Mammary epithelial cell (primary cell): ENCODE measurements at regions of chr16 and their contacts with region 1.

Region 1: GRCh38 chr16:8655184-8655717 is 19.2 kb upstream of the ABAT start:
- DNase-seq: peak; percentile 42
- H3K4me3 ChIP-seq: no peak overlapping the region
- H3K27ac ChIP-seq: no peak overlapping the region
- H3K4me1 ChIP-seq: no peaks in the 10 kb centered on the region
- H3K27me3 ChIP-seq: no peaks in the 10 kb centered on the region
- CTCF ChIP-seq: peak; percentile 36 to 49

Region 2: DNA sequence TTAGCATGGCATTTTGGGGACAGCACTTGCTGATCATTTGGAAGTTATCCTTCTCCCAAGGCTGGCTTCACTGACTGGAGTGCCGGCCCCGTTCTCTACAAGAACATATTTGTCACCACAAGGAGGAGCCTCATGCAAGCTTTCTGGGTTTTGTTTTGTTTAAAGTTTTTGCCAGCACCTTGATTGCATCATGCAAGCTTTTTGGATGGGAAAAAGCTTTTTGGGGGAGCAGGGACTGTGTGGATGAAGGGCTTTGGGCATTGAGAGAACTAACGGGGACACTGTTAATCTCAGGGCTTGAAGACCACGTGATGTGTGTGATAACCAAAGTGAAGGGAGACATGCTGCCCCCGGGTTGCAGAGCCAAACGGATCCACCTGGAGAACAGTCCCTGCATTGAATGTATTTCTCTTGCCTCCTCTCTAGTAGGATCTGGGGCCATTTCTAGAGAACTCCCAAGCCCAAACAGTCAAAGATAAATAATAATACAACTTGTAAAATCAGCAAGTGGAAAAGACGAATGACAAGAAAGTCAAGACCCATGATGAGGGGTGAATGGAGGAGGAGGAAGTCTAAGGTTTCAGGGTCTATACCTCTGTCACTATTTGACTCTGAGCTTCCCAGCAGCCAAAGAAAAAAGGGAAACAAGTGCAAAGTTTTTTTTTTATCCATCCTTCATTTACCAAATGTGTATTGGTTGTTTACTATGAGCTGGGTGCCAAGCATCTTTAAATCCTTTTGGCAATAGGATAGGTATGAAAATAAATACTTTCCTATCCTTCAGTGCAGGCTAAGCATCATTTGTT is 82.1 kb before region 1 on chr16:
- CTCF ChIA-PET with region 1: no interaction called
- dilution Hi-C with region 1: no loop called
- in situ Hi-C with region 1: loop called (anchors 5 to 10 kb)
- intact Hi-C with region 1: loop called (anchors 1 kb)
- DNase-seq: peak; percentile 24
- H3K4me3 ChIP-seq: no peak overlapping the region
- H3K27ac ChIP-seq: no peak overlapping the region
- H3K4me1 ChIP-seq: no peaks in the 10 kb centered on the region
- H3K27me3 ChIP-seq: no peaks in the 10 kb centered on the region
- CTCF ChIP-seq: peak; percentile 33 to 67

Region 3: GRCh38 chr16:8621572-8622314 is 33.5 kb before region 1 on chr16 and contains the start of gene METTL22:
- CTCF ChIA-PET with region 1: no interaction called
- dilution Hi-C with region 1: no loop called
- in situ Hi-C with region 1: no loop called
- intact Hi-C with region 1: loop called (anchors 2 kb)
- DNase-seq: peak; percentile 74
- H3K4me3 ChIP-seq: peak within 1 kb of the TSS; percentile 63 to 85 (median 79)
- H3K27ac ChIP-seq: peak within 1 kb of the TSS; percentile 83
- H3K4me1 ChIP-seq: peaks cover 10% of the 10 kb centered on the region
- H3K27me3 ChIP-seq: no peaks in the 10 kb centered on the region
- CTCF ChIP-seq: no peak
- total RNA-seq, gene METTL22: 35.2 to 40.9 TPM

Region 4: GRCh38 chr16:8694795-8695728 is 39.8 kb after region 1 on chr16:
- CTCF ChIA-PET with region 1: no interaction called
- dilution Hi-C with region 1: no loop called
- in situ Hi-C with region 1: no loop called
- intact Hi-C with region 1: no loop called
- DNase-seq: no peak
- H3K4me3 ChIP-seq: no peak overlapping the region
- H3K27ac ChIP-seq: no peak overlapping the region
- H3K4me1 ChIP-seq: no peaks in the 10 kb centered on the region
- H3K27me3 ChIP-seq: no peaks in the 10 kb centered on the region
- CTCF ChIP-seq: no peak

Region 5: GRCh38 chr16:8708536-8708935 is 53.3 kb after region 1 on chr16:
- CTCF ChIA-PET with region 1: no interaction called
- dilution Hi-C with region 1: no loop called
- in situ Hi-C with region 1: no loop called
- intact Hi-C with region 1: no loop called
- DNase-seq: no peak
- H3K4me3 ChIP-seq: no peak overlapping the region
- H3K27ac ChIP-seq: no peak overlapping the region
- H3K4me1 ChIP-seq: no peaks in the 10 kb centered on the region
- H3K27me3 ChIP-seq: no peaks in the 10 kb centered on the region
- CTCF ChIP-seq: no peak

Region 6: GRCh38 chr16:8878521-8878911 is 223.3 kb after region 1 on chr16:
- CTCF ChIA-PET with region 1: no interaction called
- dilution Hi-C with region 1: no loop called
- in situ Hi-C with region 1: loop called (anchors 10 kb)
- intact Hi-C with region 1: no loop called
- DNase-seq: peak; percentile 72
- H3K4me3 ChIP-seq: no peak overlapping the region
- H3K27ac ChIP-seq: peak overlapping the region; percentile 34
- H3K4me1 ChIP-seq: peaks cover 15% of the 10 kb centered on the region
- H3K27me3 ChIP-seq: no peaks in the 10 kb centered on the region
- CTCF ChIP-seq: no peak

Region 7: GRCh38 chr16:8885674-8886592 is 230.7 kb after region 1 on chr16:
- CTCF ChIA-PET with region 1: no interaction called
- dilution Hi-C with region 1: no loop called
- in situ Hi-C with region 1: loop called in 1 of 2 experiments (anchors 10 kb)
- intact Hi-C with region 1: no loop called
- DNase-seq: peak; percentile 51
- H3K4me3 ChIP-seq: no peak overlapping the region
- H3K27ac ChIP-seq: no peak overlapping the region
- H3K4me1 ChIP-seq: peaks cover 9% of the 10 kb centered on the region
- H3K27me3 ChIP-seq: no peaks in the 10 kb centered on the region
- CTCF ChIP-seq: no peak